Common myeloid progenitor, CD34-positive (primary cell): ENCODE measurements at regions of chr3 and their contacts with region 1.

Region 1: GRCh38 chr3:51538459-51539290 is at the start of gene RAD54L2:
- DNase-seq: peak; percentile 79 to 86 (median 81)
- H3K4me3 ChIP-seq: peak within 1 kb of the TSS; percentile 57 to 98 (median 84)
- H3K27ac ChIP-seq: peak within 1 kb of the TSS; percentile 78 to 90
- H3K4me1 ChIP-seq: peaks cover 4 to 24% (median 21%) of the 10 kb centered on the region in 4 experiments
- H3K27me3 ChIP-seq: no peaks in the 10 kb centered on the region

Region 2: GRCh38 chr3:51550047-51550819 is 11.6 kb after region 1 on chr3:
- CTCF ChIA-PET with region 1: interaction called, 19 read pairs
- POLR2A ChIA-PET with region 1: no interaction called
- DNase-seq: no peak
- H3K4me3 ChIP-seq: no peak overlapping the region
- H3K27ac ChIP-seq: peak overlapping the region in 1 of 2 experiments; percentile 29
- H3K4me1 ChIP-seq: no peaks in the 10 kb centered on the region
- H3K27me3 ChIP-seq: no peaks in the 10 kb centered on the region

Region 3: DNA sequence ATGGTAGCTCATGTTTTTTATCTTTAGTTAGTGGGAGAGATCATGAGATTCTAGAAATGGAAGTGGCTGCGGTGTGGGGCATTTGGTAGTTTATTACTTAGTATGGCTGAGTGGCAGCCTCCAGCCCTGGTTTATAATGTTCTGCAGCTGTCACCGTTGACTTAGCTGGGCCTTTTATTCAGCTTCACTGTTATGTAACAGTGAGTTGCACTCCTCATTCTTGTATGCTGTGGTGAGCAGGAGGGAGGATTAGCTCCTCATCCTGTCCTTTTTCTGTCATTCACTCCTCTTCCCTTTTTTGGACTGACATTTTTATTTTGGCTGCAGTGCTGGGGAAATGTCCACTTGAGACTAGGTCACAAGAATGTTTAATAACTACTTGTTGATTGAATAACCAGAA is 29.4 kb after region 1 on chr3:
- CTCF ChIA-PET with region 1: interaction called, 21 read pairs
- POLR2A ChIA-PET with region 1: no interaction called
- DNase-seq: peak; percentile 14 to 78 (median 62)
- H3K4me3 ChIP-seq: peak overlapping the region in 2 of 7 experiments; percentile 43 to 48
- H3K27ac ChIP-seq: peak overlapping the region in 1 of 2 experiments; percentile 49
- H3K4me1 ChIP-seq: peaks cover 20 to 55% (median 41%) of the 10 kb centered on the region in 4 experiments
- H3K27me3 ChIP-seq: no peaks in the 10 kb centered on the region